Activated T-helper 1 cell treated with anti-CD3 and anti-CD28 coated beads, Interleukin-12 subunit alpha, Interleukin-12 subunit beta, Interleukin-2, Interleukin-4 antibody, amounts not matched to agents 30 ng/mL and 10 ng/mL and 1 ng/mL, durations not matched to agents 14 hours and 24 hours and 36 hours (primary cell): ENCODE measurements at regions of chr22 and their contacts with region 1.

Region 1: DNA sequence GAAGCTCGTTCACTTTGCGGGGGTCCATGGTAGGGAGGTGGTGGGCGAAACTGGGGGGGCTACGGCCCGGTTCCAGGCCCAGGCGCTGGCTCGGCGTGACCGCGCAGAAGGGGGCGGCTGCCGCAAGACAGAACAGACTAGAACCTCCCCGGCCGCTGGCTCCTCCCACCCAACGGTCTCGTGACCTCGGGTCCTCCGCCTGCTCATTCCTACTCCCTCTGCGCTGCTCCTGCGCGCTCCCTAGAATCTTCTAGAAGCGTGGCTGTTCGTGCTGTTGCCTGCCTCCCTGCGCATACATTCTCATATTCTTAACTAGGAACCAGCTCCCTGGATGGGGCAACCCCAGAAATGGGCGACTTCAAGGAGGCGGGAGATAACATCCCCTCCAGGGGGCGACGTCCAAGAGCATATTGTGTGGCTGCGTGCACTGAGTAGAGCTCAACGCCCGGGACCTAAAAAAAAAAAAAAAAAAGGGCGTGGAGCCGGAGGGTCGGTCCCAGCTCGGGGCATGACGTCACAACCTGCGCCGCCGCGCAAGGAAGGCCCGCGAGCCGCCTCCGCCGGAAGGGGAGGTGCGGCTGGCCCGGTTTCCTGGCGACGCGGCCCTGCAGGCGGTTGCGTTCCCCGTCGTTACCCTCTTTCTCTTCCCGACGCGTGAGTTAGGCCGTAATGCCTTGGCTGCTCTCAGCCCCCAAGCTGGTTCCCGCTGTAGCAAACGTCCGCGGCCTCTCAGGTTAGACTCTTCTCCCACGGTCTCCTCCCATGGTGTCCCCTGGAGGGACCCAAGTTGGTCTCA is at the starts of genes ST13 and XPNPEP3:
- DNase-seq: peak; percentile 96
- H3K4me3 Mint-ChIP-seq: peak within 1 kb of the TSS; percentile 98
- H3K27ac Mint-ChIP-seq: peak within 1 kb of the TSS; percentile 100
- H3K4me1 Mint-ChIP-seq: peaks cover 38% of the 10 kb centered on the region
- H3K27me3 Mint-ChIP-seq: no peaks in the 10 kb centered on the region
- total RNA-seq, gene ST13: 190 and 192 TPM in 2 replicates
- total RNA-seq, gene XPNPEP3: 14.7 and 15.3 TPM in 2 replicates

Region 2: GRCh38 chr22:40679964-40680818 is 176.5 kb before region 1 on chr22:
- intact Hi-C with region 1: loop called (anchors 1 kb)
- DNase-seq: no peak
- H3K4me3 Mint-ChIP-seq: no peak overlapping the region
- H3K27ac Mint-ChIP-seq: peak overlapping the region; percentile 12
- H3K4me1 Mint-ChIP-seq: peaks cover 38% of the 10 kb centered on the region
- H3K27me3 Mint-ChIP-seq: peaks cover 12% of the 10 kb centered on the region

Region 3: GRCh38 chr22:40791241-40791640 is 65.5 kb before region 1 on chr22:
- intact Hi-C with region 1: no loop called
- DNase-seq: no peak
- H3K4me3 Mint-ChIP-seq: no peak overlapping the region
- H3K27ac Mint-ChIP-seq: no peak overlapping the region
- H3K4me1 Mint-ChIP-seq: peaks cover 5% of the 10 kb centered on the region
- H3K27me3 Mint-ChIP-seq: no peaks in the 10 kb centered on the region

Region 4: GRCh38 chr22:40826984-40827741 is 29.5 kb before region 1 on chr22:
- intact Hi-C with region 1: no loop called
- DNase-seq: no peak
- H3K4me3 Mint-ChIP-seq: no peak overlapping the region
- H3K27ac Mint-ChIP-seq: no peak overlapping the region
- H3K4me1 Mint-ChIP-seq: no peaks in the 10 kb centered on the region
- H3K27me3 Mint-ChIP-seq: no peaks in the 10 kb centered on the region

Region 5: GRCh38 chr22:40898850-40899357 is 42.2 kb after region 1 on chr22:
- intact Hi-C with region 1: loop called (anchors 1 kb)
- DNase-seq: peak; percentile 8
- H3K4me3 Mint-ChIP-seq: no peak overlapping the region
- H3K27ac Mint-ChIP-seq: no peak overlapping the region
- H3K4me1 Mint-ChIP-seq: peaks cover 10% of the 10 kb centered on the region
- H3K27me3 Mint-ChIP-seq: no peaks in the 10 kb centered on the region

Region 6: DNA sequence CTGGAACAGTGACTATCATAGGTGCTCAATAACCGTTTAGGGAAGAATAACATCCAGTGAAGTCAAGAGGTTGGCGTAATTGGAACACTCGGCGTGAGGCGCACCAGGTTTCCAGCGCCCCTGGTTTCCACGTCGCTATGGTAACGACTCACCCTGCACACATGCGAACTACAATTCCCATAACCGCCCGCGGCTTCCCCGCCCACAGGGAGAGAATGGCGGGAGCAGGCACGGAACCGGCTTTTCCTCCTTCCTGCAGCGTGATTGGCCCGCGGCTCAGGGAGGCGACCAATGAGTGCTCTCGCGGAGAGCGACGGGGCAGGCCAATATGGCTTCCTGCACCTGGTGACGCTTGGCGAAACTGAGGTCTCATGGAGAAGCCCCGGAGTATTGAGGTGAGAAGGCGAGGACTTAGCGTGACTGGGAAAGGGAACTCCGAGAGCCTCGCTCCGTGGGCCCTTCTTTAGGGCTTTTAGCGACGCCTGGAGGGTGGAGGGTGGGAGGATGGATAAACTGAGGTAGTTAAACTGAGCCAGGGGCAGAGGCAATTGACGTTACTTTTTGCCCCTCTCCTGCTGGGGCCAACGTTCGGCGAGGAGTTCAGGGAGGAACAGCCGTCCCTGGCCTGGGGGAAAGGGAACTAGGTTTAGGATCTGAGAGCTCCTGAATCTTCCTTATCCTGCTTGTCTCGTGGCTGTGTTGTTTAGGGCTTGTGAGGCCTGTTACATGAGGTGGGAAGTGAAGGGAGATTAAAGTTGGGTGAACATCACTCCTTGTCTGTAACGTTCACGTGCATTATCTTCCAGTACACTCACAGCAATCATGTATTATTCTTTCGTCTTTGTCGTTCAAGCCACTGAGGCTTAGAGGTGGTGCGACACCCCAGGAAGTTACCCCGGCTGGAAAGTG is 348.5 kb after region 1 on chr22 and contains the start of gene L3MBTL2:
- intact Hi-C with region 1: loop called (anchors 2 kb)
- DNase-seq: peak; percentile 98
- H3K4me3 Mint-ChIP-seq: peak within 1 kb of the TSS; percentile 97
- H3K27ac Mint-ChIP-seq: peak within 1 kb of the TSS; percentile 94
- H3K4me1 Mint-ChIP-seq: peaks cover 21% of the 10 kb centered on the region
- H3K27me3 Mint-ChIP-seq: peaks cover 12% of the 10 kb centered on the region
- total RNA-seq, gene L3MBTL2: 51.9 and 56.6 TPM in 2 replicates

Region 7: GRCh38 chr22:41468381-41469217 is 611.9 kb after region 1 on chr22 and contains the starts of genes ACO2 and PHF5A:
- intact Hi-C with region 1: loop called (anchors 1 kb)
- DNase-seq: peak; percentile 98
- H3K4me3 Mint-ChIP-seq: peak within 1 kb of the TSS; percentile 87
- H3K27ac Mint-ChIP-seq: peak within 1 kb of the TSS; percentile 99
- H3K4me1 Mint-ChIP-seq: peaks cover 22% of the 10 kb centered on the region
- H3K27me3 Mint-ChIP-seq: no peaks in the 10 kb centered on the region
- total RNA-seq, gene ACO2: 99.1 and 101 TPM in 2 replicates
- total RNA-seq, gene PHF5A: 83.7 and 96.8 TPM in 2 replicates